Heart left ventricle (tissue), 16 donors: ENCODE measurements at regions of chr9 and their contacts with region 1.

Region 1: GRCh38 chr9:13674926-13675637 is 395.6 kb upstream of the MPDZ start:
- DNase-seq: no peak
- ATAC-seq: peak; percentile 37 to 65 (median 58)
- H3K4me3 ChIP-seq: no peak overlapping the region
- H3K27ac ChIP-seq: peak overlapping the region in 9 of 12 donors; percentile 38 to 76 (median 58)
- H3K4me1 ChIP-seq: peaks cover 0 to 18% (median 0%) of the 10 kb centered on the region in 12 donors
- H3K27me3 ChIP-seq: no peaks in the 10 kb centered on the region
- CTCF ChIP-seq: no peak
- POLR2A ChIP-seq: no peak

Region 2: GRCh38 chr9:13615660-13616490 is 59.2 kb before region 1 on chr9:
- intact Hi-C with region 1: loop called in 1 of 10 experiments (anchors 10 kb)
- DNase-seq: no peak
- ATAC-seq: no peak
- H3K4me3 ChIP-seq: no peak overlapping the region
- H3K27ac ChIP-seq: no peak overlapping the region
- H3K4me1 ChIP-seq: peaks cover 0 to 10% (median 0%) of the 10 kb centered on the region in 12 donors
- H3K27me3 ChIP-seq: no peaks in the 10 kb centered on the region
- CTCF ChIP-seq: no peak
- POLR2A ChIP-seq: no peak